Naive thymus-derived CD4-positive, alpha-beta T cell (primary cell): ENCODE measurements at regions of chr7 and their contacts with region 1.

Region 1: DNA sequence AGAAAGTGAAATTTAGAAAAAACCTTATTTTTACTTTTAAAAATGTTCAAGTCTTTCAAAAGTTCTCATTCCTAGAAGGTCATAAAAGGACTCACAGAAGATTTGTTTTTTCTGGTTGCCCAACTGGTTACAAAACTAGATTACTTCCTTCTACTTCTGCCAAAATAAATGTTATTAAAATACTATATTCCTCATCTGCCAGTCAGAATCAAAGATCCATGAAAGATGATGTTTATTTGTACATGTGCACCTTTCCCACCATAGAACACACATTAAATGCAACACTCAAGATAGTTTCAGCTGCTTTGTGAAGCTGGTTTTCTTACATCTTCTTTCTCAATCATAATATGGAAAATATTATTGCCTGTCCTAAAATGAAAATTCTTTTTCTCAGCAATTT is 465.4 kb downstream of the ETV1 start:
- DNase-seq: no peak
- ATAC-seq: no peak
- H3K4me3 ChIP-seq: no peak overlapping the region
- H3K4me3 Mint-ChIP-seq: no peak overlapping the region
- H3K27ac ChIP-seq: no peak overlapping the region
- H3K27ac Mint-ChIP-seq: no peak overlapping the region
- H3K4me1 ChIP-seq: no peaks in the 10 kb centered on the region
- H3K4me1 Mint-ChIP-seq: no peaks in the 10 kb centered on the region
- H3K27me3 ChIP-seq: no peaks in the 10 kb centered on the region
- H3K27me3 Mint-ChIP-seq: no peaks in the 10 kb centered on the region

Region 2: DNA sequence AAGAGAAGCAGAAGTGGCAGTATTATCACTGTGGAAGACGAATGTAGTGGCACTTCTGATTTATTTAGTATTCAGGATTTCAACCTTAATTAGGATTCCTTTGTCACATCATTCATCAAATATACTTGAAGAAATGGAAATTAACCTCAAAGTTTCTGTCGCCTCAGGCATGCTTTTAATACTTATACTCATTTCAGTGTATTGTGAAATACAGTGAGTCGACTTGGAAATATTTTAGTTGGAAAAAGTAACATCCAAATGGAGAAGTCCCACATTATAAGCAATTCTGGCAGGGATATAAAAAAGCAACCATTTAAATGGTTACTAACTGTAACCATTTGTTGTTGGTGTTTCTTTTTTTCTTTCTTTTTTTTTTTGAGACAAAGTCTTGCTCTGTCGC is 187.8 kb before region 1 on chr7:
- CTCF ChIA-PET with region 1: no interaction called
- POLR2A ChIA-PET with region 1: no interaction called
- intact Hi-C with region 1: no loop called
- DNase-seq: no peak
- ATAC-seq: no peak
- H3K4me3 ChIP-seq: no peak overlapping the region
- H3K4me3 Mint-ChIP-seq: no peak overlapping the region
- H3K27ac ChIP-seq: no peak overlapping the region
- H3K27ac Mint-ChIP-seq: no peak overlapping the region
- H3K4me1 ChIP-seq: no peaks in the 10 kb centered on the region
- H3K4me1 Mint-ChIP-seq: no peaks in the 10 kb centered on the region
- H3K27me3 ChIP-seq: no peaks in the 10 kb centered on the region
- H3K27me3 Mint-ChIP-seq: no peaks in the 10 kb centered on the region

Region 3: GRCh38 chr7:14691597-14692203 is 1167.6 kb after region 1 on chr7:
- CTCF ChIA-PET with region 1: no interaction called
- POLR2A ChIA-PET with region 1: no interaction called
- intact Hi-C with region 1: loop called in 1 of 2 experiments (anchors 1 kb)
- DNase-seq: peak in 5 of 9 donors; percentile 8 to 28 (median 14)
- ATAC-seq: no peak
- H3K4me3 ChIP-seq: no peak overlapping the region
- H3K4me3 Mint-ChIP-seq: no peak overlapping the region
- H3K27ac ChIP-seq: no peak overlapping the region
- H3K27ac Mint-ChIP-seq: no peak overlapping the region
- H3K4me1 ChIP-seq: no peaks in the 10 kb centered on the region
- H3K4me1 Mint-ChIP-seq: no peaks in the 10 kb centered on the region
- H3K27me3 ChIP-seq: no peaks in the 10 kb centered on the region
- H3K27me3 Mint-ChIP-seq: peaks cover 0 to 5% (median 0%) of the 10 kb centered on the region in 5 donors